CD4-positive, alpha-beta T cell (primary cell): ENCODE measurements at regions of chr5 and their contacts with region 1.

Region 1: GRCh38 chr5:149434162-149435014 is 55.3 kb upstream of the IL17B start:
- DNase-seq: peak; percentile 9 to 72 (median 39)
- ATAC-seq: peak; percentile 74
- H3K4me3 ChIP-seq: no peak overlapping the region
- H3K4me3 Mint-ChIP-seq: no peak overlapping the region
- H3K27ac ChIP-seq: no peak overlapping the region
- H3K27ac Mint-ChIP-seq: no peak overlapping the region
- H3K4me1 ChIP-seq: peaks cover 9% of the 10 kb centered on the region
- H3K4me1 Mint-ChIP-seq: peaks cover 7% of the 10 kb centered on the region
- H3K27me3 ChIP-seq: no peaks in the 10 kb centered on the region
- H3K27me3 Mint-ChIP-seq: no peaks in the 10 kb centered on the region
- CTCF ChIP-seq: peak; percentile 93

Region 2: GRCh38 chr5:149317281-149318048 is 116.9 kb before region 1 on chr5:
- CTCF ChIA-PET with region 1: interaction called, 3 read pairs
- POLR2A ChIA-PET with region 1: no interaction called
- intact Hi-C with region 1: loop called (anchors 1 kb)
- DNase-seq: peak in 13 of 14 experiments; percentile 11 to 79 (median 25)
- ATAC-seq: peak; percentile 78
- H3K4me3 ChIP-seq: no peak overlapping the region
- H3K4me3 Mint-ChIP-seq: no peak overlapping the region
- H3K27ac ChIP-seq: no peak overlapping the region
- H3K27ac Mint-ChIP-seq: no peak overlapping the region
- H3K4me1 ChIP-seq: peaks cover 5% of the 10 kb centered on the region
- H3K4me1 Mint-ChIP-seq: peaks cover 6% of the 10 kb centered on the region
- H3K27me3 ChIP-seq: no peaks in the 10 kb centered on the region
- H3K27me3 Mint-ChIP-seq: no peaks in the 10 kb centered on the region
- CTCF ChIP-seq: peak; percentile 89

Region 3: GRCh38 chr5:149381987-149382340 is 52.4 kb before region 1 on chr5:
- CTCF ChIA-PET with region 1: no interaction called
- POLR2A ChIA-PET with region 1: no interaction called
- intact Hi-C with region 1: loop called in 1 of 2 experiments (anchors 2 kb)
- DNase-seq: peak; percentile 48 to 82 (median 69)
- ATAC-seq: peak; percentile 85
- H3K4me3 ChIP-seq: no peak overlapping the region
- H3K4me3 Mint-ChIP-seq: no peak overlapping the region
- H3K27ac ChIP-seq: no peak overlapping the region
- H3K27ac Mint-ChIP-seq: no peak overlapping the region
- H3K4me1 ChIP-seq: peaks cover 7% of the 10 kb centered on the region
- H3K4me1 Mint-ChIP-seq: no peaks in the 10 kb centered on the region
- H3K27me3 ChIP-seq: no peaks in the 10 kb centered on the region
- H3K27me3 Mint-ChIP-seq: no peaks in the 10 kb centered on the region
- CTCF ChIP-seq: peak; percentile 86

Region 4: GRCh38 chr5:149581192-149581861 is 146.9 kb after region 1 on chr5 and contains the start of gene ARHGEF37:
- CTCF ChIA-PET with region 1: no interaction called
- POLR2A ChIA-PET with region 1: no interaction called
- intact Hi-C with region 1: no loop called
- DNase-seq: peak in 13 of 14 experiments; percentile 13 to 62 (median 35)
- ATAC-seq: peak; percentile 79
- H3K4me3 ChIP-seq: peak within 1 kb of the TSS; percentile 68
- H3K4me3 Mint-ChIP-seq: peak within 1 kb of the TSS; percentile 78
- H3K27ac ChIP-seq: no peak within 1 kb of the TSS
- H3K27ac Mint-ChIP-seq: no peak within 1 kb of the TSS
- H3K4me1 ChIP-seq: peaks cover 16% of the 10 kb centered on the region
- H3K4me1 Mint-ChIP-seq: peaks cover 22% of the 10 kb centered on the region
- H3K27me3 ChIP-seq: peaks cover 2 to 4% of the 10 kb centered on the region in 2 experiments
- H3K27me3 Mint-ChIP-seq: peaks cover 4% of the 10 kb centered on the region
- CTCF ChIP-seq: no peak
- total RNA-seq, gene ARHGEF37: 0.41 TPM in 1 of 2 experiments, not detected in the other